ENCODE measurements at regions of chr1 and their contacts with region 1.

Region 1: DNA sequence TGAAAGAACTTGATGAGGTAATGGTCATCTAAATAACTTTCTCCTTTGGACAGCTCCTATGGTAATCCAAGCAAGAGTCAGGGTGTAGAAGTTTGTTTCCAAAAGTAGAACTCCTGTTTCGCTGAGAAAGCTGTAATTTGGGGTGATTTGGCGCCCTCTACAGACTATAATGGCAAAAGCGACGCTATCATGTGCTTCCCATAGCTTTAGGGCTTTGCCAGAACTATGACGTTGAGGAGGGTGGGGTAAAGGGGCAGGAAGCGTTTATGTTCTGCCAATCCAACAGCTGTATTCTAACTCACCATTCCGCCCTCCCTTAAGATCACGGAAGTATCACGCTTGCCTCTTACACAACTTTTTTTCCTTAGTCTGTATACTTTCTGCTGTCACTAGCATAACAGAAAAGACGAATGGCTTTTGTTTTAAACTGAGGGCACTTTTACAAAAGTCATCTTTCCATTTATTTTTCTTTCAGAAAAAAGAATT is at the start of gene FMO4:
- DNase-seq: peak; percentile 38 to 98
- ATAC-seq: peak; percentile 100
- H3K4me3 ChIP-seq: peak within 1 kb of the TSS in 8 of 10 donors; percentile 25 to 55 (median 50)
- H3K27ac ChIP-seq: peak within 1 kb of the TSS in 9 of 10 donors; percentile 36 to 85 (median 69)
- H3K4me1 ChIP-seq: peaks cover 0 to 19% (median 10%) of the 10 kb centered on the region in 9 donors
- H3K27me3 ChIP-seq: no peaks in the 10 kb centered on the region
- CTCF ChIP-seq: peak; percentile 55 to 95 (median 85)
- total RNA-seq, gene FMO4: 2.8 to 8.7 (median 5.3) TPM

Region 2: GRCh38 chr1:170967042-170967910 is 346.6 kb before region 1 on chr1:
- intact Hi-C with region 1: loop called in 6 of 10 experiments (anchors 1 to 10 kb)
- DNase-seq: peak in 1 of 2 donors; percentile 11
- ATAC-seq: peak in 2 of 8 donors; percentile 50 to 64
- H3K4me3 ChIP-seq: no peak overlapping the region
- H3K27ac ChIP-seq: no peak overlapping the region
- H3K4me1 ChIP-seq: peaks cover 0 to 4% (median 0%) of the 10 kb centered on the region in 9 donors
- H3K27me3 ChIP-seq: no peaks in the 10 kb centered on the region
- CTCF ChIP-seq: peak; percentile 49 to 79 (median 69)

Region 3: GRCh38 chr1:171081314-171081753 is 232.5 kb before region 1 on chr1:
- intact Hi-C with region 1: loop called in 6 of 10 experiments (anchors 2 to 10 kb)
- DNase-seq: no peak
- ATAC-seq: peak in 7 of 8 donors; percentile 38 to 65 (median 56)
- H3K4me3 ChIP-seq: no peak overlapping the region
- H3K27ac ChIP-seq: peak overlapping the region in 8 of 10 donors; percentile 9 to 71 (median 48)
- H3K4me1 ChIP-seq: peaks cover 0 to 42% (median 10%) of the 10 kb centered on the region in 9 donors
- H3K27me3 ChIP-seq: no peaks in the 10 kb centered on the region
- CTCF ChIP-seq: peak; percentile 27 to 74 (median 59)

Region 4: GRCh38 chr1:171245458-171246064 is 68.3 kb before region 1 on chr1:
- intact Hi-C with region 1: loop called in 9 of 10 experiments (anchors 1 to 5 kb)
- DNase-seq: no peak
- ATAC-seq: peak in 6 of 8 donors; percentile 55 to 80 (median 64)
- H3K4me3 ChIP-seq: no peak overlapping the region
- H3K27ac ChIP-seq: no peak overlapping the region
- H3K4me1 ChIP-seq: peaks cover 0 to 7% (median 0%) of the 10 kb centered on the region in 9 donors
- H3K27me3 ChIP-seq: peaks cover 0 to 6% (median 0%) of the 10 kb centered on the region in 7 donors
- CTCF ChIP-seq: peak in 8 of 9 donors; percentile 62 to 78 (median 68)

Region 5: DNA sequence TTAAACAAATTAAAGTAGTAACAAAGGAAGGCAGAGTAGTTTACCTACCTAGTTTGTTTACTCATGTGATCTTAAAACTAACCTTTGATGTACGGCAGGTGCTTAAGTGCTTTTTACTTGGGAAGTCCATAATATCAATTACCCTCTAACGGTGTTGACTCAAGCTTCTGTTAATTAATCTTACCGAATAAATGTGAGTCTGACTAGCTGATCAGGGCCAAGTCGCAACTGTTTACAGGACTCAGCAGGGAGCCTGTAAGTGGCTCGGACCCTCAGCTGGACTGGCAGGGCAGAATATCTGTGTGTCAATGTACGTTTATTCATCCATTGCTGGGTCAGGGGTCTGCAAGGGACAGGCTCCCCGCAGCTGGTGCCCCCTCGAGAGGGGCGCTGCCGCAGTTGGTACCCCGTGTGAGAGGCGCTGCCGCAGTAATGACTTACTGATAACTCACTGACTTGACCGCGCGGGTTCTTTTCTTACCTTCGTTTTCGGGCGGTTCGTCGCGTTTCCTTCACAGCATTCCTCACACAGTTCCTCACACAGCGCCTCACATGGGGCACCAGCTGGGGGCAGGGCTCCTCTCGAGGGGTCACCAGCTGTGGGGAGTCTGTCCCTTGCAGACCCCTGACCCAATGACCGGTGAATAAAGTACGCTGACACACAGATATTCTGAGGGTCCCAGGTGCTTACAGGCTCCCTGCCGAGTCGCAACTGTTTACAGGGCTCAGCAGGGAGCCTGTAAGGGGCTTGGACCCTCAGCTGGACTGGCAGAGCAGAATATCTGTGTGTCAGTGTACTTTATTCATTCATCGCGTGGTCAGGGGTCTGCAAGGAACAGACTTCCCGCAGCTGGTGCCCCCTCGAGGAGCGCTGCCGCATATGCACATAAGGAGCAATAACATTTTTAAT is 62.6 kb before region 1 on chr1:
- intact Hi-C with region 1: loop called in 9 of 10 experiments (anchors 1 to 5 kb)
- DNase-seq: peak; percentile 16 to 27
- ATAC-seq: peak in 7 of 8 donors; percentile 26 to 61 (median 53)
- H3K4me3 ChIP-seq: peak overlapping the region; percentile 18 to 64 (median 58)
- H3K27ac ChIP-seq: peak overlapping the region in 1 of 10 donors; percentile 14
- H3K4me1 ChIP-seq: peaks cover 0 to 16% (median 4%) of the 10 kb centered on the region in 9 donors
- H3K27me3 ChIP-seq: peaks cover 0 to 29% (median 14%) of the 10 kb centered on the region in 7 donors
- CTCF ChIP-seq: peak; percentile 21 to 59 (median 54)

Region 6: GRCh38 chr1:171256940-171257606 is 56.8 kb before region 1 on chr1:
- intact Hi-C with region 1: loop called in 2 of 10 experiments (anchors 5 kb)
- DNase-seq: no peak
- ATAC-seq: peak in 4 of 8 donors; percentile 11 to 64 (median 24)
- H3K4me3 ChIP-seq: no peak overlapping the region
- H3K27ac ChIP-seq: peak overlapping the region in 5 of 10 donors; percentile 7 to 58 (median 39)
- H3K4me1 ChIP-seq: peaks cover 0 to 22% (median 7%) of the 10 kb centered on the region in 9 donors
- H3K27me3 ChIP-seq: peaks cover 0 to 18% (median 10%) of the 10 kb centered on the region in 7 donors
- CTCF ChIP-seq: no peak

Region 7: DNA sequence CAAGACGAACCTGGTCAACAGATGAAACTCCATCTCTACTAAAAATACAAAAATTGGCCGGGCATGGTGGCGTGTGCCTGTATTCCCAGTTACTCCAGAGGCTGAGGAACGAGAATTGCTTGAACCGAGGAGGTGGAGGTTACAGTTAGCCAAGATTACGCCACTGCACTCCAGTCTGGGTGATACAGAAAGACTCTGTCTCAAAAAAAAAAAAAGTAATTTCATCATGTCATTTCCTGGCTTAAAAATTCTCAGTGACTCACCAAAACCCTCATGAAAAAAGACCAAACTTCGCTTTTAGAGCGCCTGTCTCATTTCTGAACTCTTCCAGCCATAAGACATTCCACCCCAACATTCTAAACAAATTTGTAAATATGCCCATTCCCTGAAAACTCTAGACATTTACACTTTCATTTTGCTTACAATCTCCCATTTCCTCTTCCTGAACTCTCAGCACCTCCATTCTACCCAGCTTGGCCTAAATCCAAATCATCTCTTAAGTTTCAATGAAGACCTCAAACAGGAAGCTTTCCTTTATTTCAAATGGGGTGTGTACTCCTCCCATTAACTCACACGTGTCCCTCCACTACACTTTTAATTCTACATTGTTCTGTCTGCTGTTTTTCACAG is 121.0 kb after region 1 on chr1:
- intact Hi-C with region 1: no loop called
- DNase-seq: no peak
- ATAC-seq: peak; percentile 55 to 83 (median 74)
- H3K4me3 ChIP-seq: peak overlapping the region in 2 of 10 donors; percentile 9 to 10
- H3K27ac ChIP-seq: peak overlapping the region in 8 of 10 donors; percentile 18 to 84 (median 56)
- H3K4me1 ChIP-seq: peaks cover 0 to 12% (median 5%) of the 10 kb centered on the region in 9 donors
- H3K27me3 ChIP-seq: no peaks in the 10 kb centered on the region
- CTCF ChIP-seq: no peak

Region 8: GRCh38 chr1:171485375-171486047 is 171.6 kb after region 1 on chr1 and contains the start of gene PRRC2C:
- intact Hi-C with region 1: loop called in 1 of 10 experiments (anchors 10 kb)
- DNase-seq: peak; percentile 97 to 98
- ATAC-seq: peak; percentile 99 to 100 (median 99)
- H3K4me3 ChIP-seq: peak within 1 kb of the TSS; percentile 77 to 99 (median 90)
- H3K27ac ChIP-seq: peak within 1 kb of the TSS; percentile 92 to 100 (median 98)
- H3K4me1 ChIP-seq: peaks cover 2 to 51% (median 42%) of the 10 kb centered on the region in 9 donors
- H3K27me3 ChIP-seq: no peaks in the 10 kb centered on the region
- CTCF ChIP-seq: peak in 8 of 9 donors; percentile 4 to 93 (median 76)
- total RNA-seq, gene PRRC2C: 47.6 to 77.2 (median 60.0) TPM